ENCODE measurements at regions of chr10 and their contacts with region 1.

Region 1: GRCh38 chr10:112307358-112308124 is 24.3 kb downstream of the TECTB start:
- DNase-seq: no peak
- H3K4me3 ChIP-seq: no peak overlapping the region
- H3K27ac ChIP-seq: no peak overlapping the region
- H3K4me1 ChIP-seq: peaks cover 0 to 29% (median 1%) of the 10 kb centered on the region in 4 donors
- H3K27me3 ChIP-seq: peaks cover 0 to 2% of the 10 kb centered on the region in 2 donors
- CTCF ChIP-seq: peak; percentile 51 to 70

Region 2: DNA sequence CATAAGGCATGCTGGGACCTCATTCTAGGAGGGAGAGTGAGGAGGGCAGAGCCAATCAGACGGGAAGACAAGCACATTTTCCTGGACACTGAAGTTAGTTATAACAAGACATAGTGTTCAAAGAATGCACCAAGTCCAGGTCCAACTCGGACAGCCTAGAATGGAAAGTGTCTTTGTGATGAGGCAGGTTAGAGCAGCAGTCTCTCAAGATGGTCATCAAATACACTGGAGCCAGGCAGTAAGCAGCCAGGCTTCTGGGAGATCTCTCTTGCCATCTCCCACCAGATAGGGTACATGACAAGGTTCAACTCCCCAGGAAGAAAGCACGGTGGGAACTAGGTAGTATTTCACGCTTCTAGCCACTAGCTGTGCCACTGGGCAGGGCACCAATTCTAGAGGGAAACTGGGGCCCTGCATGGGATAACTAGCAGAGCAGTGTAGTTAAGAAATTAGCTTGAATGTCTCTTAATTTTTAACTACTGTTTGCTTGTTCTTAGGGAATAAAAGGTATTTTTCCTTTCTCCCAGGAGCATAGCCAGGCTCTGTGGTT is 116.4 kb before region 1 on chr10:
- intact Hi-C with region 1: loop called (anchors 5 kb)
- DNase-seq: no peak
- H3K4me3 ChIP-seq: no peak overlapping the region
- H3K27ac ChIP-seq: peak overlapping the region in 1 of 2 donors; percentile 48
- H3K4me1 ChIP-seq: peaks cover 4 to 44% (median 6%) of the 10 kb centered on the region in 4 donors
- H3K27me3 ChIP-seq: no peaks in the 10 kb centered on the region
- CTCF ChIP-seq: no peak